ENCODE measurements at regions of chr16 and their contacts with region 1.

Region 1: DNA sequence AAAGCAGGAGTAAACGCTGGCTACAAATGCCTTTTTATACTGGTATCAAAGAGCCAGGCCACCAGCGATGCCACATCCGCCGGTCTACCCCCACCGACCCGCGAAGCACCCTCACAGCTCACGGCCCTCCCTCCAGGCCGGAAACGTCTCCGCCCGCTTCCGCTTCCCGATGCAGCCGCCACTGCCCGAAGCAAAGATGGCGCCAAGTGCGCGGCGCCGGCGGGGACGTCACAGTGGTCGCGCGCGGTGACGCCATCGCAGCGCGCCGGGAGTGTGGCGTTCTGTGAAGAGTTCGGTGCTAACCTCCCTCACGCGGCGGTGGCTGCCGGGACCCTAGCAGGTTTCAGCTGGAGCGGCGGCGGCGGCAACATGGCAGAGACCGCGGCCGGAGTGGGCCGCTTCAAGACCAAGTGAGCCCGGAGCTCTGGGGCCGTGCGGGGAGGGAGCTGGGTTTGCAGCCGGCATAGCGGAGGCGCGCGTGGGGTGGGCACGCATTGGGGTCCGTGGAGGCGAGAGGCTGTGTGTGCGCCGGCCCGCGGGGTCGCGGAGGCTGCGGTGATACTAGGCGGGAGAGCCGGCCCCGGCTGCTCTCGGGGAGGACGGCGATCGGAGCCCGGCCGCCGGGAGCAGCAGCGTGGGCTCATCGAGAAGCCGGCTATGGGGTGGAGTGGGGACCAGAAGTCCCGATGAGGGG is at the start of gene TBL3:
- DNase-seq: peak; percentile 49
- H3K4me3 ChIP-seq: peak within 1 kb of the TSS; percentile 85
- CTCF ChIP-seq: no peak

Region 2: GRCh38 chr16:1959269-1960049 is 12.5 kb before region 1 on chr16 and contains the start of gene NDUFB10:
- CTCF ChIA-PET with region 1: interaction called, 5 read pairs
- POLR2A ChIA-PET with region 1: interaction called, 20 read pairs
- DNase-seq: peak; percentile 16
- H3K4me3 ChIP-seq: peak within 1 kb of the TSS; percentile 86
- CTCF ChIP-seq: peak; percentile 65

Region 3: GRCh38 chr16:2071454-2072202 is 99.7 kb after region 1 on chr16:
- CTCF ChIA-PET with region 1: no interaction called
- POLR2A ChIA-PET with region 1: no interaction called
- DNase-seq: no peak
- H3K4me3 ChIP-seq: no peak overlapping the region
- CTCF ChIP-seq: no peak

Measured in AG04449 (cell line).